Caco-2 (cell line): ENCODE measurements at regions of chr12 and their contacts with region 1.

Region 1: GRCh38 chr12:116236148-116236731 is 41.3 kb downstream of the MED13L start:
- DNase-seq: peak in 1 of 2 experiments; percentile 50
- H3K4me3 ChIP-seq: no peak overlapping the region
- H3K4me3 Mint-ChIP-seq: no peak overlapping the region
- H3K27ac Mint-ChIP-seq: no peak overlapping the region
- H3K4me1 ChIP-seq: peaks cover 6% of the 10 kb centered on the region; the same call in 1 of the 2 replicates
- H3K4me1 Mint-ChIP-seq: peaks cover 16% of the 10 kb centered on the region
- H3K27me3 ChIP-seq: no peaks in the 10 kb centered on the region
- H3K27me3 Mint-ChIP-seq: no peaks in the 10 kb centered on the region
- CTCF ChIP-seq: peak; percentile 44 to 71

Region 2: DNA sequence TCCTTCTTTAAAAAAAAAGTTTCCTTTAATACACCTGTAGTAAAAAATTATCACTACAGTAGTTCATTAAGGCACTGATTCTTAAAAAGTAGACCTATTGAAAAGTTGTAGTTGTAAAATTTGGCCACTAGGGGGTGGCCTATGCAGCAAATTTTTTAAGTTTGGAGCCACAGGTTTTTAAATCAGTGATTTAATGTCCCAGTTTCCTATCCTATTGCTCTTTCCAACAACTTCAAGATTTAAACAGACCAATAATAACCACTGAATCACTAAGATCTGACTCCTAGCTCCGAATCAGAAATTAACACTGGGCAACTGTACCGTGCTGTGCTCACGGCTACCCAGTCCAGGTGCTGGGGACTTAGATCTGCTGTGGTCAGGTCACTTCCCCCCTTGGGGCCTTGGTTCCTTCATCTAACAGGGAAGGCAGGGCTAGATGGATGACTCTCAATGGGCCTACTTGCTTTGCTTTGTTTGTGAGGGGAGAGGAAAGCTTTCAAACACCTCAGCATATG is 238.1 kb before region 1 on chr12:
- CTCF ChIA-PET with region 1: interaction called, 3 read pairs
- POLR2A ChIA-PET with region 1: no interaction called
- intact Hi-C with region 1: loop called (anchors 2 kb)
- DNase-seq: peak in 1 of 2 experiments; percentile 42
- H3K4me3 ChIP-seq: no peak overlapping the region
- H3K4me3 Mint-ChIP-seq: no peak overlapping the region
- H3K27ac Mint-ChIP-seq: no peak overlapping the region
- H3K4me1 ChIP-seq: peaks cover 4% of the 10 kb centered on the region; the same call in 1 of the 2 replicates
- H3K4me1 Mint-ChIP-seq: peaks cover 6% of the 10 kb centered on the region
- H3K27me3 ChIP-seq: no peaks in the 10 kb centered on the region
- H3K27me3 Mint-ChIP-seq: no peaks in the 10 kb centered on the region
- CTCF ChIP-seq: peak; percentile 58 to 75

Region 3: GRCh38 chr12:116066381-116067230 is 169.6 kb before region 1 on chr12:
- CTCF ChIA-PET with region 1: no interaction called
- POLR2A ChIA-PET with region 1: no interaction called
- intact Hi-C with region 1: loop called (anchors 10 kb)
- DNase-seq: peak; percentile 54 to 60
- H3K4me3 ChIP-seq: no peak overlapping the region
- H3K4me3 Mint-ChIP-seq: no peak overlapping the region
- H3K27ac Mint-ChIP-seq: no peak overlapping the region
- H3K4me1 ChIP-seq: no peaks in the 10 kb centered on the region; the same call in 1 of the 2 replicates
- H3K4me1 Mint-ChIP-seq: peaks cover 19% of the 10 kb centered on the region
- H3K27me3 ChIP-seq: no peaks in the 10 kb centered on the region
- H3K27me3 Mint-ChIP-seq: no peaks in the 10 kb centered on the region
- CTCF ChIP-seq: peak; percentile 84 to 93

Region 4: DNA sequence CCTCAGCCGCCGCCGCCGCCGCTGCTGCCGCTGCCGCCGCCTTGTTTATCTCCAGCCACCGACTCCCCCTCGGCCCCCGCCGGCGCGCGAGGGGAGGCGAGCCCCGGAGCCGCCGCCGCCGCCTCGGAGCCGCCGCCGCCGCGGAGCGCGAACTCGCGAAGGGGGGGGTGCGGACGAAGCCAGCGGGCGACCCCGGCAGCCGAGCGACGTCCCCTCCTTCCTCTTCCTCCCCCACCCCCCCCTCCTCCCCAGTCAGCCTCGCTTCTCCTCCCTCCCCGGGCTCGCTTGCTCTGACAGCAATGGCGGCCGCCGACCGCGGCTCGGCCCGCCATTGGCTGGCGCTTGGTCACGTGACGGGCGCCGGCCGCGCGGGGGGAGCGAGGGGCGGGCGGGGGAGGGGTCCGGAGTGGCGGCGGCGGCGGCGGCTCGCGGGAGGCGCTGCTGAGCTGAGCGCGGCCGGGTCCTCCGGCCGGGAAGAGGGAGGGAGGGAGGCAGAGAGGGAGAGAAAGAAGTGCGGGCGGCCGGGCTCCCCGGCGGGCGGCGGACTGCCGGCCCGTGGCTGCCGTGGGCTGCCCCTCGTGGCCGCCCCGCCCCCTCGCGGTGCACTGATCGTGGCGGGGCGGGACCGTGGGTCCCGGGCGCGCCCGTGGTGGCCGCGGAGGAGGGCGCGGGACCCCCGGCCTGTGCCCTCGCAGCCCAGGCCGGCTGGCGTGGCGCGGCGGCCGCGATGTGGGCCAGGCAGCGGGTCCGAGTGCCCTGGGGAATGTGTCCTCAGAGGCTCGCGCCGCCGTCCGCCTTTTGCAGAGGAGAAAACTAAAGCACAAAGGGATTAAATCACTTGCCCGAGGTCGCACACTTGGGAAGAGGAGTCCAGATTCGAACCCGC is 41.4 kb after region 1 on chr12 and contains the start of gene MED13L:
- CTCF ChIA-PET with region 1: no interaction called
- POLR2A ChIA-PET with region 1: no interaction called
- intact Hi-C with region 1: no loop called
- DNase-seq: peak; percentile 86 to 92
- H3K4me3 ChIP-seq: peak within 1 kb of the TSS; percentile 81
- H3K4me3 Mint-ChIP-seq: peak within 1 kb of the TSS; percentile 83
- H3K27ac Mint-ChIP-seq: peak within 1 kb of the TSS; percentile 92
- H3K4me1 ChIP-seq: peaks cover 20% of the 10 kb centered on the region
- H3K4me1 Mint-ChIP-seq: peaks cover 30% of the 10 kb centered on the region
- H3K27me3 ChIP-seq: no peaks in the 10 kb centered on the region
- H3K27me3 Mint-ChIP-seq: no peaks in the 10 kb centered on the region
- CTCF ChIP-seq: peak in 1 of 2 experiments; percentile 18
- total RNA-seq, gene MED13L: 160 and 168 TPM in 2 replicates

Region 5: GRCh38 chr12:116411977-116412376 is 175.7 kb after region 1 on chr12:
- CTCF ChIA-PET with region 1: no interaction called
- POLR2A ChIA-PET with region 1: no interaction called
- intact Hi-C with region 1: no loop called
- DNase-seq: no peak
- H3K4me3 ChIP-seq: no peak overlapping the region
- H3K4me3 Mint-ChIP-seq: no peak overlapping the region
- H3K27ac Mint-ChIP-seq: no peak overlapping the region
- H3K4me1 ChIP-seq: peaks cover 4% of the 10 kb centered on the region
- H3K4me1 Mint-ChIP-seq: peaks cover 7% of the 10 kb centered on the region
- H3K27me3 ChIP-seq: no peaks in the 10 kb centered on the region
- H3K27me3 Mint-ChIP-seq: no peaks in the 10 kb centered on the region
- CTCF ChIP-seq: no peak